ENCODE measurements at regions of chr22 and their contacts with region 1.

Region 1: GRCh38 chr22:49852898-49853894 is at the start of gene ZBED4:
- DNase-seq: peak; percentile 98 to 99
- ATAC-seq: peak; percentile 95 to 96 (median 96)
- H3K4me3 ChIP-seq: peak within 1 kb of the TSS; percentile 94
- H3K27ac ChIP-seq: peak within 1 kb of the TSS; percentile 97
- H3K4me1 ChIP-seq: peaks cover 21% of the 10 kb centered on the region
- H3K27me3 ChIP-seq: peaks cover 0 to 25% (median 17%) of the 10 kb centered on the region in 3 donors
- CTCF ChIP-seq: no peak
- total RNA-seq, gene ZBED4: 5.9 to 9.0 (median 8.3) TPM

Region 2: GRCh38 chr22:49917974-49918910 is 65.0 kb after region 1 on chr22 and contains the starts of genes ALG12 and CRELD2:
- intact Hi-C with region 1: loop called (anchors 2 to 10 kb)
- DNase-seq: peak; percentile 99
- ATAC-seq: peak; percentile 98 to 99 (median 98)
- H3K4me3 ChIP-seq: peak within 1 kb of the TSS; percentile 91
- H3K27ac ChIP-seq: peak within 1 kb of the TSS; percentile 95
- H3K4me1 ChIP-seq: peaks cover 12% of the 10 kb centered on the region
- H3K27me3 ChIP-seq: no peaks in the 10 kb centered on the region
- CTCF ChIP-seq: no peak
- total RNA-seq, gene ALG12: 6.5 to 10.8 (median 8.7) TPM
- total RNA-seq, gene CRELD2: 9.9 to 14.0 (median 11.5) TPM